Right ventricle myocardium inferior (tissue), 1 donor: ENCODE measurements at regions of chr3 and their contacts with region 1.

Region 1: GRCh38 chr3:50321336-50322114 is 1.0 kb downstream of the HYAL2 start:
- DNase-seq: peak; percentile 96
- ATAC-seq: peak; percentile 84

Region 2: GRCh38 chr3:50260027-50260941 is 61.2 kb before region 1 on chr3:
- intact Hi-C with region 1: loop called (anchors 1 kb)
- DNase-seq: peak; percentile 97
- ATAC-seq: peak; percentile 86

Region 3: GRCh38 chr3:50298836-50299637 is 22.5 kb before region 1 on chr3 and contains the starts of genes HYAL3 and NAA80:
- intact Hi-C with region 1: loop called (anchors 1 kb)
- DNase-seq: peak; percentile 100
- ATAC-seq: peak; percentile 92
- total RNA-seq, gene HYAL3: 1.4 TPM
- total RNA-seq, gene NAA80: 5.8 TPM

Region 4: DNA sequence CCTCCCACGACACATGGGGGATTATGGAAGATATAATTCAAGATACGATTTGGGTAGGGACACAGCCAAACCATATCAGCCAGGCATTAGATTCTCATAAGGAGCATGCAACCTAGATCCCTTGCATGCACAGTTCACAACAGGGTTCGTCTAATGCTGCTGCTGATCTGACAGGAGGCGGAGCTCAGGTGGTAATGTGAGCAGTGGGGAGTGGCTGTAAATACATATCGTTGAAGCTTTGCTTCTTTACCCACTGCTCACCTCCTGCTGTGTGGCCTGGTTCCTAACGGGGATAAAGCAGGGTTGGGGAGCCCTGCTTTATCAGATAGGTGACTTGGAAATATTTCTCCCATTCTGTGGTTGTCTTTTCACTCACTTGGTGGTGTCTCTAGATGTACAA is 368.0 kb after region 1 on chr3:
- intact Hi-C with region 1: no loop called
- DNase-seq: no peak
- ATAC-seq: no peak